ENCODE measurements at regions of chr2 and their contacts with region 1.

Region 1: DNA sequence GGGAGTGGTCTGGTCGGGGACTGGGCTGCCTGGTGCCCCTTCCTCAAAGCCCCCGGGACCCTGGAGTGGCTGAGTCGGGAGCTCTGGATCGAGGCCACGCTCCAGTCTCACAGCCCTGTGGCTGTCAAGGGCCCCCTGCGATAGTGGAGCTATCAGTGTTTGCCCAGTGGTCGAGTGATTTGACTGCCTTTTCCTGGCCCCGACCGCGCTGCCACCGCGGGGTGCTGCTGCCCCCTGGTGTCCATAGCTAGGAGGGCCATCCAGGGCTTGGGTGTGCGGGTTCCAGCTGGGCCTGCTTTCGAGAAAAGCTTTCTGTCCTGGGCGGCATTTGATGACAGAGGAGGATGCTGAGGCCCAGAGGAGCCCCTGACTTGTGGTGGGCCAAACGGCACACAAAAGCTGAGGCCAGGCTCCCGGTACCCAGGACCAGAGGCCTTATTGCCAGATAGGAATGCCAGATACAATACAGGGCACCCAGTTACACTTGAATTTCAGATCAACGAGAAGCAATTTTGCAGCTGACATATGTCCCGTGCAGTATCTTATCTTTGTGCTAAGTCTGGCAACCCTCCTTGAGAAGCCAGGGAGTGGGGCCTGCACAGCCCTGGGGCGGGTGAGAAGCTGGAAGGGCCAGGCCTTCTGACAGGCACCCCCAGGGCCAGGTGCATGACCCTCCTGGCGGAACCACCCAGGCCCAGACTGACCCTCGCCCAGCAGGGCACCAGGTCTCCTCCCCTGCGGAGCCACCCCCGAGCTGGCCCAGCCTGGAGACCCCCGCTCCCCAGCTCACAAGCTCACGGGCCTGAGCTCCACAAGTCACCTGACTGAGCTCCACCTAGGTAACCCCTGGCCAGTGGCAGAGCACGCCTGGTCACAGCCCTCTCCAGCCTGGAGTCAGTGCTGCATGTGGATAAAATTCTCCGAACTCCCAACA is 13.0 kb downstream of the ODC1 start:
- DNase-seq: peak; percentile 69
- H3K4me3 Mint-ChIP-seq: no peak overlapping the region
- H3K27ac Mint-ChIP-seq: no peak overlapping the region
- H3K4me1 Mint-ChIP-seq: peaks cover 7% of the 10 kb centered on the region
- H3K27me3 Mint-ChIP-seq: peaks cover 9% of the 10 kb centered on the region

Region 2: DNA sequence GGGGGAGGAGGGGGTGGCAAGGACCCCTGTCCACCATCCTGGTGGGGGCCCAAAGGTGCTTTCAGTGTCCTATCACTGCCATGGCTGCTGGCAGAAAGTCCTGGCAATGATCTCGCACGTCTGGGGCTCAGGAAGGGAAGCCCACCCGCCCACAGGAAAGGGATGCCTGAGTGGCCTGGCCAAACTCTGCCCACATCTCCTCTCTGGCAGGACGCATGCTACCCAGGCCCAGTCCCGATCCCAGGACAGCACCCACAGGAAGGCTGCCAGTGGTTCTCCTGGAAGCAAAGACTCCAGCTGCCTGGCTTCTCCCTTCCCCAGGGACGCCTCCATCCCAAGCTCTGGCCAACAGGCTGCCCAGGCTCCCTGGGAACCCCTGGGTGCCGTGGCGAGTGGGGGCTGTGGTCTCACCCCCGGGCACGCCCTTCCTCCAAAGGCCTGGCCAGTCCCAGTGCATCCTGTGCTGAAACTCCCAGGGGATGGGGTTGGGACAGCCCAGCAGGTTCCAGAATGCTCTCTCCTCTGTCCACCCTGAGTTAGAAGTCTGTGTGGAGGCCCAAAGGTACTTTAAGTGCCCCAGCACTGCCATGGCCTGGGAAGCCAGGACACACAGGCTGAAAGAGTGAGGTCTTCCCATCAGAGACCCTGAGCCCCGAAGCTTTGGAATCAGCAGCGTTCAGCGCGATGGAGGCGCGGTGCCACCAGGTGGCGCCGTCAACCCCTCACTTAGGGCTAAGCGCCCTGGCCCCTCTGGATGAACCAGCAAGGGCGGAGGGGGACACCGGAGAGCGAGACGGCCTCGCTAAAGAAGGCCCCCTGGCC is 621.6 kb before region 1 on chr2:
- CTCF ChIA-PET with region 1: interaction called, 7 read pairs
- intact Hi-C with region 1: loop called (anchors 5 kb)
- DNase-seq: peak; percentile 75
- H3K4me3 Mint-ChIP-seq: no peak overlapping the region
- H3K27ac Mint-ChIP-seq: no peak overlapping the region
- H3K4me1 Mint-ChIP-seq: peaks cover 12% of the 10 kb centered on the region
- H3K27me3 Mint-ChIP-seq: no peaks in the 10 kb centered on the region

Region 3: DNA sequence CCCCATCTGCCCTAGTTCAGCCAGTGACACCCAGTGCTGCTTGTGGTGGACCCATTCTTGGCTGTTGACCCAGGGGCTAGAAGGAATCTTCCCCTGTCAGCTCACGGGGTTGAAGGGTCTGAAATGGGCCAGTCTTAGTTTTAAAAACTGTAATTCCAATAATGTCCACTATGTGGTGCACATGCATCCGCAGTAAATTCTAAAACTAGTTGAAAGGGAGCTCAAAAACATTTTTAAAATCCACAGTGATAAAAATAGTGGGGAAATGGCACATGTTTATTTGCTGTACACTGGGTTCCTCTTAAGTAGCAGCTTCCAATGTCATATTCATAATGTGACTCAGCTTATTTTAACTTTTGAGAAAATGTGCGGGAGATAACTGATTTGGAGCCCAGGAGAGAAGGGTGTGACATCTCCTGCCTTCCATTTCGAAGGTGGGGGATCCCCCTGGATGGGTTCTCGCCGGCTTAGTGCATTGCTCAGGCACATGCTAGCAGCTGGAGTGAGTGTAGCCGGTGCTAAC is 450.9 kb before region 1 on chr2:
- CTCF ChIA-PET with region 1: interaction called, 3 read pairs
- intact Hi-C with region 1: loop called (anchors 5 kb)
- DNase-seq: peak; percentile 48
- H3K4me3 Mint-ChIP-seq: no peak overlapping the region
- H3K27ac Mint-ChIP-seq: no peak overlapping the region
- H3K4me1 Mint-ChIP-seq: peaks cover 15% of the 10 kb centered on the region
- H3K27me3 Mint-ChIP-seq: no peaks in the 10 kb centered on the region

Region 4: DNA sequence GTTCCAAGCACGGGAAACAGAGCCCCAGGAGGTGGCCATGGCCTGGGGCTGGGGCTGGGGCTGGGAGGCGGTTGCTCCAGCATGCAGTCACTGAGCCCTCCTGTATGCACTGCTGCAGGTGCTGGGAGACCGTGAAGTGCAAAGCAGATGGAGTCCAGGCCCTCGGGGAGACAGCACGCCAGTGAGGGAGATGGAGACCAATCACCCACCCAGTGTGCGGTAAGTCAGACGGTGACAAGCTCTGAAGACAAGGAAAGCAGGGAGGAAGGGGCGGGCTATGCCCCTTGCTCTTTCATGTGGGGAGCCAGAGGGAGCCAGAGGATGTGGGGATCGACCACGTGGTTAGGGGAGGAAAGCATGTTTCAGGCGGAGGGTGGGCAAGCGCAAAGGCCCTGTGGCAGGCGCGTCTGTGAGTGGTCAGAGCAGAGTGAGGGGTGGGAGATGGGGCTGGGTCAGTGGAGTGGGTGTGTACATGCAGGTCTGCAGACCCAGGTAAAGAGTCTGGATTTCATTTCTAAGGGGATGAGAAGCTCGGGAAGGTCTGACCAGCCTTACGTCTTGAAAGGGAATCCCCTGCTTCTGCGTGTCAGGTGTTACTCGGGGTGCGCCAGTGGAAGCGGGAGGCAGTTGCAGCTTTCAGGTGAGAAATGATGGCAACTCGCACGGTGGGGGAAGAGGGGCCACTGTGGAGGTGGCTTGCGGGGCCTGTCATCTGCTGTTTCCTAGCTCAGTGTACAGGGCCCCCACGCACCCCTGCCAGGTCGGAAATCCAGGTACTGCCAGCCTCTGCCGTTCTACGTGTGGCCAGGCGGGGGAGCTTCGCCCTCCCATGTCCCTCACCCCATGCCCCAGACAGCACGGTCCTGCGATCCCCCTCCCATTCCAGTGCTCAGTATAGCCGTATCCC is 293.2 kb before region 1 on chr2:
- CTCF ChIA-PET with region 1: interaction called, 28 read pairs
- intact Hi-C with region 1: loop called (anchors 1 kb)
- DNase-seq: no peak
- H3K4me3 Mint-ChIP-seq: no peak overlapping the region
- H3K27ac Mint-ChIP-seq: no peak overlapping the region
- H3K4me1 Mint-ChIP-seq: peaks cover 18% of the 10 kb centered on the region
- H3K27me3 Mint-ChIP-seq: no peaks in the 10 kb centered on the region

Region 5: DNA sequence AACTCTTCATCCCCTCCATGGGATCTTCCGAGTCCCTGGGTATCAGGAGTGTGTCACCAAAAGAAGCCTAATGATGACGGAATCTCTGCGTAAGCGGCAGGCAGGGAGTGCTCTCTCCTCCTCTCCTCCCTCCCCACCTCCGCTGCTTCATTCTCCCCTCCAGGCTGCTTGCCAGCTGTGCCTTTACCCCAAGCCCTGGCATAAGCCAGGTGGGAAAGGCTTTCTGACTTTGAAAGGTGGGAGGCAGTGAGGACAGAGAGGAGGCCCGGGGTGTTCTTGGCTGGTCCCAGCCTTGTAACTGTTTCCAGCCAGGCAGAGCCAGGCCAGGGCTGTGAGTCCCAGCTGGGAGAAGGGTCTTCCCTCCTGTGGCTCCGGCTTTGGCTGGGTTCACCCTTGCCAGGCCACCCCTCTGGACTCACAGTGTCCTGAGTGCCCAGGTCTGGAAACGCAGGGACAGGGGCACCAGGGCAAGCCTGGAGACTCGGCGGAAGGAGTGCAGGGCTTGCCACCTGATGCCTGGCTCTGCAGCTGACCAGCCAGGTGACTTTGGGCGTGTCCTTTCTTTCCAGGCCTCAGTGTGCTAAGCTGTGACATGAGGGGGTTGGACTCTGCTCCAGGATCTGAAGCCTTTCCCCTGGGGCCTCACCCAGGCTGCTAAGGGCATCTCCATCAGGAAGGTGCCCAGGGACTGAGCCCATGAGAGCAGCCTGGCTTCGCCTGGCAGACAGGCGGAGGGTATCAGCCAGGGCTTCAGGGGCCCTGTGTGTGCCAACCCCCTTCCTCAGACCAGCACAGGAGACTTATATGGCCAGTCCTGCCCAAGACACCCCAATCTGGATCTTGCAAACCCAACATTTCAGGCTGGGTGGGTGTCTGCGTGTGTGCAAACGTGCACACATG is 165.2 kb before region 1 on chr2:
- CTCF ChIA-PET with region 1: interaction called, 18 read pairs
- intact Hi-C with region 1: loop called (anchors 1 kb)
- DNase-seq: no peak
- H3K4me3 Mint-ChIP-seq: no peak overlapping the region
- H3K27ac Mint-ChIP-seq: no peak overlapping the region
- H3K4me1 Mint-ChIP-seq: peaks cover 7% of the 10 kb centered on the region
- H3K27me3 Mint-ChIP-seq: no peaks in the 10 kb centered on the region